ENCODE measurements at regions of chr1 and their contacts with region 1.

Region 1: DNA sequence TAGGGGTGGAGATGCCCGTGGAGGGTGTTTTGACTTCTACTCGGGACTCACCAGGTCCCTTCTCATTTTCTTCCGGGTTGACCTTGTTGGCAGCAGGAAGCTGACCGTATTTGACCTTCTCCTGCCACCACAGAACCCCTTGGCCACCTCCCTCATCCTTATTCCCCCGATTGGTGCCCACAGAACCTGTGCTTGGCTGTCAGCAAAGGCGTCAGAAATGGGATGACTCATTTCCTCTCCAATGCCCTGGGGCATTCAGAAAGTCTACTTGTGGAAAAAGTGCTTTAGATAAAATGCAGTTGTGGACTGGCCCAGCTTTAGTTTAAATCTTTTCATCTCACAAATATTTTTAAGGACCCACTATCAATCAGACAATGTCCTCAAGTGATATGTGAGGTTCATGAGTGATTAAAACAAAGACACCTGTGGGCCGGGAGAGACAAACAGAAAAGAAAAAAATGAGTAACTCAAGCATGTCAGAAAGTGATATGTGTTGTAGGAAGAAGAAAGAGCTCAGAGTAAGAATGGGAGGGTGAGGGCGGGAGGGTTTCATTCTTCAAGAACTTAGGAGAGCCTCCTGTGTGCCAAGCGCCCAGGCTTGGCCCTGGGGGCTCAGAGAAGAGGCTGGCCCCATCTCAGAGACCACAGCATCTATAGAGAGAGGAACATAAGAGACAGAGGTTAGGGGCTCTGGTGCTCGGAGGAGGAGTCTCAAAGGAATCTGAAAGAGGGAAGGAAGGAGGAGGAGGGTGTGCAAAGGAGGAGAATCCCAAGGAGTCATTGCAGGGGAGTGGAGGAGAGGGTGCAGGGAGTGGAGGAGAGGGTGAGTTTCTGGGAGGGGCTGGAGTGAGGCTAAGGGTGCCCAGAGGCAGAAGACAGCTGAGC is 221.6 kb upstream of the VAMP3 start:
- DNase-seq: peak; percentile 78
- H3K4me3 Mint-ChIP-seq: peak overlapping the region; percentile 40
- H3K27ac Mint-ChIP-seq: peak overlapping the region; percentile 89
- H3K4me1 Mint-ChIP-seq: peaks cover 12% of the 10 kb centered on the region
- H3K27me3 Mint-ChIP-seq: peaks cover 13% of the 10 kb centered on the region

Region 2: GRCh38 chr1:7526867-7527732 is 22.4 kb before region 1 on chr1:
- CTCF ChIA-PET with region 1: no interaction called
- POLR2A ChIA-PET with region 1: no interaction called
- intact Hi-C with region 1: loop called (anchors 2 kb)
- DNase-seq: peak; percentile 25
- H3K4me3 Mint-ChIP-seq: no peak overlapping the region
- H3K27ac Mint-ChIP-seq: peak overlapping the region; percentile 18
- H3K4me1 Mint-ChIP-seq: no peaks in the 10 kb centered on the region
- H3K27me3 Mint-ChIP-seq: peaks cover 13% of the 10 kb centered on the region

Region 3: GRCh38 chr1:7948960-7949359 is 399.4 kb after region 1 on chr1:
- CTCF ChIA-PET with region 1: no interaction called
- POLR2A ChIA-PET with region 1: no interaction called
- intact Hi-C with region 1: loop called (anchors 1 kb)
- DNase-seq: peak; percentile 44
- H3K4me3 Mint-ChIP-seq: peak overlapping the region; percentile 27
- H3K27ac Mint-ChIP-seq: peak overlapping the region; percentile 84
- H3K4me1 Mint-ChIP-seq: peaks cover 29% of the 10 kb centered on the region
- H3K27me3 Mint-ChIP-seq: no peaks in the 10 kb centered on the region